ENCODE measurements at regions of chr12 and their contacts with region 1.

Region 1: GRCh38 chr12:6735448-6736191 is 11.8 kb downstream of the COPS7A start:
- DNase-seq: peak; percentile 34 to 44 (median 43)
- H3K4me3 ChIP-seq: no peak overlapping the region
- H3K4me3 Mint-ChIP-seq: no peak overlapping the region
- H3K27ac ChIP-seq: no peak overlapping the region
- H3K27ac Mint-ChIP-seq: peak overlapping the region in 2 of 7 donors; percentile 38 to 77
- H3K4me1 ChIP-seq: no peaks in the 10 kb centered on the region
- H3K4me1 Mint-ChIP-seq: peaks cover 4% of the 10 kb centered on the region
- H3K27me3 ChIP-seq: no peaks in the 10 kb centered on the region
- H3K27me3 Mint-ChIP-seq: peaks cover 0 to 2% (median 2%) of the 10 kb centered on the region in 3 donors
- CTCF ChIP-seq: peak; percentile 68

Region 2: GRCh38 chr12:6778574-6779550 is 43.2 kb after region 1 on chr12:
- intact Hi-C with region 1: loop called (anchors 5 kb)
- DNase-seq: peak; percentile 82 to 87 (median 86)
- H3K4me3 ChIP-seq: peak overlapping the region; percentile 14 to 74 (median 21)
- H3K4me3 Mint-ChIP-seq: peak overlapping the region; percentile 80 to 94
- H3K27ac ChIP-seq: no peak overlapping the region
- H3K27ac Mint-ChIP-seq: peak overlapping the region in 5 of 7 donors; percentile 33 to 88 (median 75)
- H3K4me1 ChIP-seq: peaks cover 17 to 37% of the 10 kb centered on the region in 2 donors
- H3K4me1 Mint-ChIP-seq: peaks cover 25% of the 10 kb centered on the region
- H3K27me3 ChIP-seq: peaks cover 4 to 44% of the 10 kb centered on the region in 2 donors
- H3K27me3 Mint-ChIP-seq: peaks cover 44 to 49% (median 47%) of the 10 kb centered on the region in 3 donors
- CTCF ChIP-seq: peak; percentile 87